Endothelial cell of umbilical vein (primary cell): ENCODE measurements at regions of chr22 and their contacts with region 1.

Region 1: GRCh38 chr22:38051900-38052862 is 5.0 kb upstream of the PICK1 start:
- DNase-seq: peak; percentile 74
- H3K4me3 ChIP-seq: no peak overlapping the region
- H3K27ac ChIP-seq: no peak overlapping the region
- H3K4me1 ChIP-seq: peaks cover 4% of the 10 kb centered on the region
- H3K27me3 ChIP-seq: peaks cover 0 to 2% of the 10 kb centered on the region in 2 experiments
- CTCF ChIP-seq: peak; percentile 79 to 88
- POLR2A ChIP-seq: no peak

Region 2: GRCh38 chr22:37896181-37896592 is 156.0 kb before region 1 on chr22:
- CTCF ChIA-PET with region 1: no interaction called
- POLR2A ChIA-PET with region 1: no interaction called
- dilution Hi-C with region 1: no loop called
- intact Hi-C with region 1: no loop called
- DNase-seq: peak; percentile 48
- H3K4me3 ChIP-seq: no peak overlapping the region
- H3K27ac ChIP-seq: peak overlapping the region; percentile 40
- H3K4me1 ChIP-seq: peaks cover 16% of the 10 kb centered on the region
- H3K27me3 ChIP-seq: no peaks in the 10 kb centered on the region
- CTCF ChIP-seq: no peak
- POLR2A ChIP-seq: no peak

Region 3: DNA sequence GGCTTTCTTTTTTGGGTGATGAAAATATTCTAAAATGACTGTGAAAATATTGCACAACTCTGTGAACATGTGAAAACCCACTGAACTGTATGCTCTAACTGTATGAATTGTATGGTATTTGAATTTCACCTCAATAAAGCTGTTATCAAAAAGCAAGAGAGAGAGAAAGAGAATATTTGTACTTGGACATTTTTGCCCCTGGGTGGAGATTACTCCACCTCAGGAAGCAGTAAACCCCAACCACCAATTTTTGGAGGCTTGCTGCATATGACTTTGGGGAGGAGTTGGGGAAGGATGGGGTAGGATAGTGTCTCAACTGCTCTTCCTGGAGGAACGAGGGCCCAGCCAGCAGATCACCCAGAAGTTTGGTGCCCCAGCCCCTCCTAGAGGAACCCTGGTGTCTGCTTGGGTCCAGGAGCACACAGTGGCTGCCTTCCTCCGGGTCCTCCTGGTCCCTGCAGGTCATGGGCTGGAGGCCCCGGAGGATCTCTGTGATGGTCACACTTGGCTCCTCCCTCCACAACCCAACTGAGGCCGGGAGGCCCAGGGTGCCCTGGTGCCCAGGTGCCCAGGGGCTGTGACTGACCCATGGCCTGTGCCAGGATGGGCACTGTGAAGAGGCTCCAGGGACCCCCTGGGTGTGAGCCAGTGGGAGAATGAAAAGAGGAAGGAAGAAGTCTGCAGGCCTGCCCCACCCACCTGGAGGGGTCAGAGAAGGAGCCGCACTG is 10.3 kb before region 1 on chr22:
- CTCF ChIA-PET with region 1: interaction called, 15 read pairs
- POLR2A ChIA-PET with region 1: no interaction called
- dilution Hi-C with region 1: no loop called
- intact Hi-C with region 1: no loop called
- DNase-seq: no peak
- H3K4me3 ChIP-seq: no peak overlapping the region
- H3K27ac ChIP-seq: no peak overlapping the region
- H3K4me1 ChIP-seq: no peaks in the 10 kb centered on the region
- H3K27me3 ChIP-seq: no peaks in the 10 kb centered on the region
- CTCF ChIP-seq: no peak
- POLR2A ChIP-seq: no peak

Region 4: DNA sequence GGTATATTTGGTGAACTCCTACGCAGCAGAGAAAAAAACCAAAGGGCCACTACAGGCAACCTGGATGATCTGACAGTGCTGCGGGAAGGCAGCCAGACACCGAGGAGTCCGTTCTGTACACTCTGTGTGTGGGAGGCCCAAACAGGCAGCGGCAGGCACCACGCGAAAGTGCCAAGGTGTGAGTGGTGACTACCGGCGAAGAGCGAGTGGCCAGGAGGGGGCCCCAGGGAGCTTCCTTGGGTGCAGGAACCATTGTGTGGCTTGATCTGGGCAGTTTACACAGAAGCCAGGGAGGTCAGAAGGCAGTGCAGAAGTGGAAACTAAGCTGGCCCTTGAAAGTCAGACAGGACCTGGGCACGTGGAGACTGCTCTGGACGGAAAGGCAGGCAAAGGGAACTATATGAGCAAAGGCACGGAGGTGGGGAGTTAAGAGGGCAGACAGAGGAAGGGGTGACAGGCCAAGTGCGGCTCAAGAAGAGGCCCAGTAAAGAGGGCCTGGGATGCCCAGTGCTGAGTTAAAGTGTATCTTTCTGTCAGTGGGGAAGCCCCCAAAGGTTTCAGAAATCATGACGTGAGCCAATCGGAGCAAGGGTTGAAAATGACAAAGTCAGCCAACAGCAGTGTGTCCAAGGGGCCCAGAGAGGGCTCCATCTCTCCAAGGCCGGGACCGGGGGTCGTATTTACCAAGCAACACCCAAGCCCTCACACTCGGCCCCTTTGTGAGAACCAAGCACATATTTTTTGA is 210.0 kb after region 1 on chr22:
- CTCF ChIA-PET with region 1: interaction called, 10 read pairs
- POLR2A ChIA-PET with region 1: no interaction called
- dilution Hi-C with region 1: no loop called
- intact Hi-C with region 1: no loop called
- DNase-seq: peak; percentile 29
- H3K4me3 ChIP-seq: no peak overlapping the region
- H3K27ac ChIP-seq: no peak overlapping the region
- H3K4me1 ChIP-seq: peaks cover 21% of the 10 kb centered on the region
- H3K27me3 ChIP-seq: no peaks in the 10 kb centered on the region
- CTCF ChIP-seq: peak; percentile 52 to 71
- POLR2A ChIP-seq: no peak

Region 5: GRCh38 chr22:38347897-38348750 is 295.9 kb after region 1 on chr22:
- CTCF ChIA-PET with region 1: interaction called, 29 read pairs
- POLR2A ChIA-PET with region 1: no interaction called
- dilution Hi-C with region 1: no loop called
- intact Hi-C with region 1: loop called (anchors 1 kb)
- DNase-seq: no peak
- H3K4me3 ChIP-seq: no peak overlapping the region
- H3K27ac ChIP-seq: no peak overlapping the region
- H3K4me1 ChIP-seq: no peaks in the 10 kb centered on the region
- H3K27me3 ChIP-seq: no peaks in the 10 kb centered on the region
- CTCF ChIP-seq: no peak
- POLR2A ChIP-seq: no peak

Region 6: GRCh38 chr22:38569972-38570778 is 518.0 kb after region 1 on chr22 and contains the start of gene DMC1:
- CTCF ChIA-PET with region 1: interaction called, 76 read pairs
- POLR2A ChIA-PET with region 1: interaction called, 9 read pairs
- dilution Hi-C with region 1: no loop called
- intact Hi-C with region 1: loop called (anchors 1 kb)
- DNase-seq: peak; percentile 69
- H3K4me3 ChIP-seq: peak within 1 kb of the TSS; percentile 19 to 75 (median 60)
- H3K27ac ChIP-seq: no peak within 1 kb of the TSS
- H3K4me1 ChIP-seq: peaks cover 7% of the 10 kb centered on the region
- H3K27me3 ChIP-seq: peaks cover 0 to 2% of the 10 kb centered on the region in 2 experiments
- CTCF ChIP-seq: no peak
- POLR2A ChIP-seq: no peak
- total RNA-seq, gene DMC1: 0.91 and 1.1 TPM in 2 replicates